GM10248 (cell line): ENCODE measurements at regions of chr6 and their contacts with region 1.

Region 1: DNA sequence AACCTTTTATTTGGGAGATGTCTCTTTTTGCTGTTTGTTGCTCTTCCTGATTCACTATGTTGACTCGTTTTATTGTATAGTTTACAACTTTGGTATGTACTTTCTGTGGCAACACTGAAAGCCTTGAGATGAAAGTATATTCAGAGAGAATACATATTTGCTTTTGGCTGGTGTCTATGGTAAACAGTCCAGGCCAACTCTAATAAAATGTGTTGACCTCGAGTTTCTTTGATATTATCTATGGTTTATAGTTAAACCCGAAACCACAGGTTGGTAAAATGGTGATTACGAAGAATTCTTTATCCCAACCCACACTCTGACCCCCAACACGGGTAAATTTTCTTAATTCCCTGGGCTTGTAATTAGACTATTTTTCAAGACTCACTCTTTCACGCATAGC is 919.7 kb upstream of the MAP3K7 start:
- DNase-seq: no peak
- CTCF ChIP-seq: no peak

Region 2: GRCh38 chr6:91521319-91521718 is 14.8 kb after region 1 on chr6:
- CTCF ChIA-PET with region 1: interaction called, 16 read pairs
- POLR2A ChIA-PET with region 1: no interaction called
- DNase-seq: no peak
- CTCF ChIP-seq: no peak